ENCODE measurements at regions of chr5 and their contacts with region 1.

Region 1: GRCh38 chr5:115460472-115460871 is 84.1 kb downstream of the FEM1C start:
- DNase-seq: peak; percentile 91
- H3K4me3 ChIP-seq: no peak overlapping the region
- H3K27ac ChIP-seq: peak overlapping the region; percentile 72
- H3K4me1 ChIP-seq: peaks cover 37% of the 10 kb centered on the region
- H3K27me3 ChIP-seq: no peaks in the 10 kb centered on the region
- CTCF ChIP-seq: no peak
- POLR2A ChIP-seq: no peak

Region 2: GRCh38 chr5:115194676-115195075 is 265.8 kb before region 1 on chr5:
- CTCF ChIA-PET with region 1: no interaction called
- POLR2A ChIA-PET with region 1: no interaction called
- dilution Hi-C with region 1: no loop called
- intact Hi-C with region 1: no loop called
- DNase-seq: no peak
- H3K4me3 ChIP-seq: no peak overlapping the region
- H3K27ac ChIP-seq: no peak overlapping the region
- H3K4me1 ChIP-seq: no peaks in the 10 kb centered on the region
- H3K27me3 ChIP-seq: peaks cover 0 to under 1% of the 10 kb centered on the region in 2 experiments
- CTCF ChIP-seq: no peak
- POLR2A ChIP-seq: no peak

Region 3: DNA sequence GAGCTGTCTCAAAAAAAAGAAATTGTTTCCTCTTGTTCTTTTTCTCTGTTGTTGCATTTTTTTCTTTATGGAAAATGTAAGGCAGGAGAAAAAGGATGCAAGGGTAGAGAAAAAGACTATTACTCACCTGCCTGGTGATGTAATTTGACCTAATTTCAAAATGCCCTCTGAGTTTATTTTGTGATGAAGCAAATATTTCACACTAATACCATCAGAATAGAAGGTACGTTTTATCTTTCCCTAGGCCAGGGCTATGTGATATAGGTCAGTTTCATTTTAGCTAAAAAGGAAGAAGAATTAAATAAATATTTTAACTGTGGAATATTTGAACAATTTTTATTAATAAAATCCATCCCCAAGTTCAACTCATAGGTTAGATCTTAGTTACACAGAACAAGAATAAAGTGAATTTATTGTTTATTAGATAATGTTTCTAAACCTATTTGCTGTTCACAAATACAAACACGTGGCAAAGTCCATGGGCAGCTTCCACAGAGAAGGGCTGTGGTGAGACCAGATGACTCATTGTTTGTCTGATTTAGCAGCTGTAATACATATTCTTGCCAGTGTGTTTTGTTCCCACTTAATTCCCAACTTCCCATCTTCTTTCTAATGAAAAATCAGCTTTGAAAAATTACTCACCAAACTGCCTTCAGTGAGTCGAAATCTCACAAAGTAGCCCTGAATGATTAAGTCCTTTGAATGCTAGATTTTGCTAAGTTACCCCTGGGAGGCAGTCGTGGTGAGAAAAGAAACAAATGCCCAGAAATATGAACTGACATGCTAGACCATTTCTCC is 111.3 kb before region 1 on chr5:
- CTCF ChIA-PET with region 1: interaction called, 5 read pairs
- POLR2A ChIA-PET with region 1: no interaction called
- dilution Hi-C with region 1: no loop called
- intact Hi-C with region 1: loop called (anchors 5 kb)
- DNase-seq: peak; percentile 86
- H3K4me3 ChIP-seq: peak overlapping the region in 1 of 3 experiments; percentile 20
- H3K27ac ChIP-seq: peak overlapping the region; percentile 76
- H3K4me1 ChIP-seq: peaks cover 18% of the 10 kb centered on the region
- H3K27me3 ChIP-seq: no peaks in the 10 kb centered on the region
- CTCF ChIP-seq: no peak
- POLR2A ChIP-seq: no peak